CD8-positive, alpha-beta T cell (primary cell): ENCODE measurements at regions of chr14 and their contacts with region 1.

Region 1: GRCh38 chr14:49862089-49862673 is 9.6 kb upstream of the NEMF start:
- DNase-seq: peak; percentile 78 to 93 (median 85)
- ATAC-seq: peak; percentile 32
- H3K4me3 ChIP-seq: peak overlapping the region; percentile 66 to 80
- H3K4me3 Mint-ChIP-seq: no peak overlapping the region
- H3K27ac ChIP-seq: peak overlapping the region; percentile 97 to 98
- H3K27ac Mint-ChIP-seq: no peak overlapping the region
- H3K4me1 ChIP-seq: peaks cover 28% of the 10 kb centered on the region
- H3K4me1 Mint-ChIP-seq: peaks cover 7% of the 10 kb centered on the region
- H3K27me3 ChIP-seq: no peaks in the 10 kb centered on the region
- H3K27me3 Mint-ChIP-seq: no peaks in the 10 kb centered on the region
- CTCF ChIP-seq: peak; percentile 100

Region 2: DNA sequence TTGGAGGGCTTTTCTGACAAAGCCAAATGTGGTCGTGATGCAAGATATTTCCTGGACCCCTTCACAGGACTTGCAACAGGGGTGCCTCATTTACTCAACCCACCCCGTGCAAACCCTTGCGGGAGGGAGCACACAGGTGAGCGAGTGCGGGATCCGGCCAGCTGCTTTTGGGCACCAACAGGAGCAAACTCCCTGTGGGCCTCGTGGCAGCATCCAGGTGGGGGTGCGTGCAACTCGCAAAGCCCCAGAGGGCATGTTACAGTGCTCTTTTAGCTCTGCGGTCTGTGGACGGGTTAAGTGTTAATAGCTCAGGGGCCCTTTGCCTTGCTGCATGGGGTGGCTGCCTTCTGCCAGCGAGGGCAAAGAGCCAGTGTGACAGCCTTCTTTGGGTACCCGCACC is 1479.2 kb before region 1 on chr14:
- CTCF ChIA-PET with region 1: no interaction called
- POLR2A ChIA-PET with region 1: no interaction called
- intact Hi-C with region 1: no loop called
- DNase-seq: no peak
- ATAC-seq: no peak
- H3K4me3 ChIP-seq: no peak overlapping the region
- H3K4me3 Mint-ChIP-seq: no peak overlapping the region
- H3K27ac ChIP-seq: no peak overlapping the region
- H3K27ac Mint-ChIP-seq: no peak overlapping the region
- H3K4me1 ChIP-seq: no peaks in the 10 kb centered on the region
- H3K4me1 Mint-ChIP-seq: no peaks in the 10 kb centered on the region
- H3K27me3 ChIP-seq: no peaks in the 10 kb centered on the region
- H3K27me3 Mint-ChIP-seq: no peaks in the 10 kb centered on the region
- CTCF ChIP-seq: no peak

Region 3: GRCh38 chr14:49633640-49634546 is 228.3 kb before region 1 on chr14:
- CTCF ChIA-PET with region 1: interaction called, 11 read pairs
- POLR2A ChIA-PET with region 1: interaction called, 16 read pairs
- intact Hi-C with region 1: no loop called
- DNase-seq: peak; percentile 88 to 97 (median 94)
- ATAC-seq: peak; percentile 84
- H3K4me3 ChIP-seq: peak overlapping the region; percentile 74 to 92
- H3K4me3 Mint-ChIP-seq: peak overlapping the region; percentile 92
- H3K27ac ChIP-seq: peak overlapping the region; percentile 95
- H3K27ac Mint-ChIP-seq: peak overlapping the region; percentile 93
- H3K4me1 ChIP-seq: peaks cover 27% of the 10 kb centered on the region
- H3K4me1 Mint-ChIP-seq: peaks cover 62% of the 10 kb centered on the region
- H3K27me3 ChIP-seq: no peaks in the 10 kb centered on the region
- H3K27me3 Mint-ChIP-seq: no peaks in the 10 kb centered on the region
- CTCF ChIP-seq: peak; percentile 72

Region 4: DNA sequence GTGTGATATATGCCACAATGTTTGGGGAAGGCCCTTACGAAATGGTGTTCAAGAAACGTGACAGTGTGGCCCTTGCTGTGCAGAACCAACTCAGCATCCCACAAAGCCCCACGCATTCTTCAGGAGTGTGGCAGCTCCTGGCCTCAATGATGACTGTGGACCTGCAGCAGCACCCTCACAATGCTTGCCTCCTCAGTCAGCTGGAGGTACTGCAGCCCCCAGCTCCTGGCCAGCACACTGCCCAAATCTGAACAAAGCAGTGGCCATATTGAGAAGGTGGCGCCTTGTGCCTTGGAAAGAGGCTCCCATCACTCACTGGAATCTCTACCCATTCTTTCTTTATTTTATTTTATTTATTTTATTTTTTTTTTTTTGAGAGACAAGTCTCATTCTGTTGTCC is 184.5 kb before region 1 on chr14:
- CTCF ChIA-PET with region 1: no interaction called
- POLR2A ChIA-PET with region 1: no interaction called
- intact Hi-C with region 1: no loop called
- DNase-seq: no peak
- ATAC-seq: no peak
- H3K4me3 ChIP-seq: no peak overlapping the region
- H3K4me3 Mint-ChIP-seq: no peak overlapping the region
- H3K27ac ChIP-seq: no peak overlapping the region
- H3K27ac Mint-ChIP-seq: no peak overlapping the region
- H3K4me1 ChIP-seq: no peaks in the 10 kb centered on the region
- H3K4me1 Mint-ChIP-seq: no peaks in the 10 kb centered on the region
- H3K27me3 ChIP-seq: no peaks in the 10 kb centered on the region
- H3K27me3 Mint-ChIP-seq: no peaks in the 10 kb centered on the region
- CTCF ChIP-seq: no peak

Region 5: GRCh38 chr14:49879683-49880204 is 17.6 kb after region 1 on chr14:
- CTCF ChIA-PET with region 1: interaction called, 64 read pairs
- POLR2A ChIA-PET with region 1: interaction called, 4 read pairs
- intact Hi-C with region 1: no loop called
- DNase-seq: peak in 6 of 9 experiments; percentile 38 to 83 (median 62)
- ATAC-seq: peak; percentile 97
- H3K4me3 ChIP-seq: no peak overlapping the region
- H3K4me3 Mint-ChIP-seq: no peak overlapping the region
- H3K27ac ChIP-seq: no peak overlapping the region
- H3K27ac Mint-ChIP-seq: no peak overlapping the region
- H3K4me1 ChIP-seq: peaks cover 11% of the 10 kb centered on the region
- H3K4me1 Mint-ChIP-seq: peaks cover 12% of the 10 kb centered on the region
- H3K27me3 ChIP-seq: no peaks in the 10 kb centered on the region
- H3K27me3 Mint-ChIP-seq: no peaks in the 10 kb centered on the region
- CTCF ChIP-seq: peak; percentile 47

Region 6: GRCh38 chr14:49971156-49972130 is 109.3 kb after region 1 on chr14:
- CTCF ChIA-PET with region 1: interaction called, 19 read pairs
- POLR2A ChIA-PET with region 1: interaction called, 24 read pairs
- intact Hi-C with region 1: loop called in 1 of 2 experiments (anchors 10 kb)
- DNase-seq: peak in 8 of 9 experiments; percentile 31 to 83 (median 61)
- ATAC-seq: peak; percentile 84
- H3K4me3 ChIP-seq: peak overlapping the region; percentile 25 to 31
- H3K4me3 Mint-ChIP-seq: peak overlapping the region; percentile 78
- H3K27ac ChIP-seq: peak overlapping the region; percentile 62 to 87
- H3K27ac Mint-ChIP-seq: peak overlapping the region; percentile 98
- H3K4me1 ChIP-seq: peaks cover 41% of the 10 kb centered on the region
- H3K4me1 Mint-ChIP-seq: peaks cover 60% of the 10 kb centered on the region
- H3K27me3 ChIP-seq: no peaks in the 10 kb centered on the region
- H3K27me3 Mint-ChIP-seq: no peaks in the 10 kb centered on the region
- CTCF ChIP-seq: no peak

Region 7: GRCh38 chr14:50060871-50061663 is 198.9 kb after region 1 on chr14:
- CTCF ChIA-PET with region 1: interaction called, 77 read pairs
- POLR2A ChIA-PET with region 1: interaction called, 71 read pairs
- intact Hi-C with region 1: loop called (anchors 2 to 5 kb)
- DNase-seq: peak in 6 of 9 experiments; percentile 35 to 81 (median 58)
- ATAC-seq: no peak
- H3K4me3 ChIP-seq: peak overlapping the region; percentile 36 to 44
- H3K4me3 Mint-ChIP-seq: peak overlapping the region; percentile 81
- H3K27ac ChIP-seq: peak overlapping the region; percentile 82 to 93
- H3K27ac Mint-ChIP-seq: peak overlapping the region; percentile 99
- H3K4me1 ChIP-seq: peaks cover 63% of the 10 kb centered on the region
- H3K4me1 Mint-ChIP-seq: peaks cover 85% of the 10 kb centered on the region
- H3K27me3 ChIP-seq: no peaks in the 10 kb centered on the region
- H3K27me3 Mint-ChIP-seq: no peaks in the 10 kb centered on the region
- CTCF ChIP-seq: no peak

Region 8: DNA sequence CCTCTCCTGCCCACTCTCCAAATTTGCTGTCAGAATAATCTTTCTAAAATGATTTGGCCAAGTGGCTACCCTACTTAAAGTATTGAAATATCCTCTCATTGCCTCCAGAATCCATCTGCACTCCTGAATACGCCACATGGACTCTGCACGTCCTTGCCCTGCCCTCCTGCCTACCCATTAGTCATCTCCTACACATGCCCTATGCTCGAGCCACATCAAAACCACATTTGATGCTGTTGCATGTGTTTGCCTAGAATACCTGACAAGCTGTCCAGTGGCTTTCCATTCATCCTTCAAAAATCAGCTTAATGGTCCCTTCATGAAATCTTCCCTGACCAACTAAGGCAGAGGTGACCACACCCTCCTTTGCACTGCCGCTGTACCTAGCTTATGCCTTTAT is 237.2 kb after region 1 on chr14:
- CTCF ChIA-PET with region 1: interaction called, 186 read pairs
- POLR2A ChIA-PET with region 1: interaction called, 18 read pairs
- intact Hi-C with region 1: no loop called
- DNase-seq: no peak
- ATAC-seq: no peak
- H3K4me3 ChIP-seq: no peak overlapping the region
- H3K4me3 Mint-ChIP-seq: no peak overlapping the region
- H3K27ac ChIP-seq: no peak overlapping the region
- H3K27ac Mint-ChIP-seq: peak overlapping the region; percentile 69
- H3K4me1 ChIP-seq: peaks cover 73% of the 10 kb centered on the region
- H3K4me1 Mint-ChIP-seq: peaks cover 71% of the 10 kb centered on the region
- H3K27me3 ChIP-seq: no peaks in the 10 kb centered on the region
- H3K27me3 Mint-ChIP-seq: no peaks in the 10 kb centered on the region
- CTCF ChIP-seq: no peak

Region 9: GRCh38 chr14:50231475-50232275 is 369.5 kb after region 1 on chr14 and contains the start of gene SOS2:
- CTCF ChIA-PET with region 1: interaction called, 3 read pairs
- POLR2A ChIA-PET with region 1: interaction called, 5 read pairs
- intact Hi-C with region 1: loop called (anchors 2 to 10 kb)
- DNase-seq: peak; percentile 63 to 91 (median 83)
- ATAC-seq: peak; percentile 78
- H3K4me3 ChIP-seq: peak within 1 kb of the TSS; percentile 77 to 86
- H3K4me3 Mint-ChIP-seq: peak within 1 kb of the TSS; percentile 86
- H3K27ac ChIP-seq: peak within 1 kb of the TSS; percentile 81 to 84
- H3K27ac Mint-ChIP-seq: peak within 1 kb of the TSS; percentile 94
- H3K4me1 ChIP-seq: peaks cover 16% of the 10 kb centered on the region
- H3K4me1 Mint-ChIP-seq: peaks cover 36% of the 10 kb centered on the region
- H3K27me3 ChIP-seq: no peaks in the 10 kb centered on the region
- H3K27me3 Mint-ChIP-seq: no peaks in the 10 kb centered on the region
- CTCF ChIP-seq: no peak
- total RNA-seq, gene SOS2: 46.8 to 50.2 TPM